ENCODE measurements at regions of chr13 and their contacts with region 1.

Region 1: GRCh38 chr13:51070005-51070649 is 40.9 kb downstream of the C13orf42 start:
- DNase-seq: peak; percentile 72
- CTCF ChIP-seq: peak; percentile 98

Region 2: GRCh38 chr13:49669735-49670309 is 1400.3 kb before region 1 on chr13:
- in situ Hi-C with region 1: loop called (anchors 25 kb)
- DNase-seq: peak; percentile 46
- CTCF ChIP-seq: peak; percentile 67

Region 3: GRCh38 chr13:52405767-52406494 is 1335.8 kb after region 1 on chr13 and contains the start of gene THSD1:
- in situ Hi-C with region 1: no loop called
- DNase-seq: peak; percentile 40
- CTCF ChIP-seq: no peak